Sigmoid colon (tissue), 7 donors: ENCODE measurements at regions of chr1 and their contacts with region 1.

Region 1: GRCh38 chr1:9052272-9053049 is 17.0 kb downstream of the SLC2A5 start:
- DNase-seq: no peak
- H3K4me3 ChIP-seq: no peak overlapping the region
- H3K27ac ChIP-seq: no peak overlapping the region
- H3K4me1 ChIP-seq: no peaks in the 10 kb centered on the region
- H3K27me3 ChIP-seq: no peaks in the 10 kb centered on the region
- CTCF ChIP-seq: no peak
- EP300 ChIP-seq: no peak
- POLR2A ChIP-seq: no peak

Region 2: DNA sequence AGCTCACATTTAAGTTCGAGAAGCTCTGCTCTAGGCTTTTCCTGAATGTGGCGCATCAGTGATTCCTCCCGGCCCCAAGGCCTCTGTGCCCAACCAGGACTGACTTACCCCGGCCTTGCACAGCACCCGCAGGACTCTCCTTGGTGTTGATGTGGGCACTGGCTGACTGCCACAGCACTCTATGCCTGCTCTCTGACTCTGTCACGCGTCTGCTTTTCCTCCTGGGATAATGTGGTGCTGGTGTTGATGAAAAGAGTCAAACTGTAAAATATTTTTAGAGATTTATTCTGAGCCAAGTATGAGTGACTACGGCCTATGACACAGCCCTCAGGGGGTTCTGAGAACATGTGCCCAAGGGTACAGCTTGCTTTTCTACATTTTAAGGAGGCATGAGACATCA is 32.4 kb after region 1 on chr1:
- intact Hi-C with region 1: loop called (anchors 5 kb)
- DNase-seq: peak; percentile 90
- H3K4me3 ChIP-seq: no peak overlapping the region
- H3K27ac ChIP-seq: peak overlapping the region; percentile 54 to 72 (median 72)
- H3K4me1 ChIP-seq: peaks cover 0 to 22% (median 18%) of the 10 kb centered on the region in 4 donors
- H3K27me3 ChIP-seq: no peaks in the 10 kb centered on the region
- CTCF ChIP-seq: no peak
- EP300 ChIP-seq: peak in 1 of 4 donors; percentile 15
- POLR2A ChIP-seq: no peak